WTC11 (cell line): ENCODE measurements at regions of chr19 and their contacts with region 1.

Region 1: DNA sequence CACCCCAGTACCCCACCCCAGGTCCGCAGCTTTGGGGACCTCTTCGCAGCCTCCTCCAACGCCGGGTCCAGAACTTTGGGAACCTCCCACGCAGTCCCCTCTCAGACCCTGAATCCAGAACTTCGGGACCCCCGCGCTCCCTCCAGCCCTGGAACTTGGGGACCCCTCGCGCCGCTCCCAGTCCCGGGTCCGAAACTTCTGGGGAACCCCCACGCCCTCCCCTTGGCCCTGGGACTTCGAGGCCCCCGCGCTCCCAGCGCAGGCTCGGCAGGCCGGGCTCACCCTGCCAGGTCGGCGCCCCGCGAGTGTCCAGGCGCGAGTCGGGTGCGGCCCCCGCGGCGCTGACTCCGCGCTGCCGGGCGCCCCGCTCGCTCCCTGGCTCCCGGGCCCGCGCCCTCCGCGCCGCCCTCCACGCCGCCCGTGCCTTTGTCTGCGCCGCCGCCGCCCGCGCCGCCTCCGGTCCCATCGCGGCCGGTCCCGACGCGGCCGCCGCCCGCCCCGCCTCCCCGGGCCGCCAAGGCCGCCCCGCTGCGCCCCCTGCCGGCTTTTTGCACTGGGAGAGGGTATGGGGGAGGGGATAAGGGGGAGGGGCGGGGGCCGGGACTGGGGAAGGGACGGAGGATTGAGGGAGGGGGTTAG is at the start of gene HOMER3:
- DNase-seq: peak; percentile 71
- ATAC-seq: peak; percentile 29
- H3K4me3 Mint-ChIP-seq: peak within 1 kb of the TSS; percentile 82
- H3K27ac Mint-ChIP-seq: no peak within 1 kb of the TSS; the same call in 1 of the 2 replicates
- H3K4me1 Mint-ChIP-seq: peaks cover 24% of the 10 kb centered on the region
- H3K27me3 Mint-ChIP-seq: peaks cover 34% of the 10 kb centered on the region
- CTCF ChIP-seq: no peak
- total RNA-seq, gene HOMER3: 28.2 to 32.4 TPM (median 32.2 TPM) in 3 replicates

Region 2: DNA sequence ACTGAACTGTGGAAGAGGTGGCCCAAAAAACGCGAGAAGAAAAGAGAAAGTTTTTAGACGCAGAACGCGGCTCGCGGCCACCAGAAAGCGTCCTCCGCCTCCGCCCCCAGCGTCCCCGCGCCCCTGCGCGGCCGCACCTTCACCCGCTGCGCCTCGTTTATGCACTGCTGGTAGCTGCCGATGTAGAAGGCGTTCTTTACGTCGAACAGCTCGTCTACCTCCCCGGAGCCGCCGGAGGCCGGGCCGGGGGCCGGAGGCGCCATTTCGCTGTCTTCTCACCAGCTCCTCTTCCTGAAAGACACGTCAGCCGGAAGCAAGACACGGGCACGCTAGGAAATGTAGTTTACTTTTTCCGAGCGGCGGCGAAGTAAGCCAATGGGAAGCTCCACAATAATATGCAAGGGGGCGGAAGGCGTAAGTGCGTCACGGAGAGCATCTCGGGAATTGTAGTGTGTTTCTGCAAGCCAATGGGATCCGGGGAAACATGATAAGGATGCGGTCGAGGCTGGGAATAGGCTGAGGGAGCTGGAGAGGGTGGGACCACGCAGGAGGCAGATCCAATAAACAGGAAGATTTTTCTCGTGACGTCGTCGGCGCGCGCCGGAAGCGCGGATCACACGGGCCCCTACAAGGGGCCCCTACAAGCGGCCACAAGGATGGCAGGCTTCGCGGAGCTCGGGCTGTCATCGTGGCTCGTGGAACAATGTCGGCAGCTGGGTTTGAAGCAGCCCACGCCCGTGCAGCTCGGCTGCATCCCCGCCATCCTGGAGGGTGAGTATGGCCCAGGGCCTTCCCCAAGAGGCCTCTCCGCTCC is 21.6 kb before region 1 on chr19 and contains the starts of genes COPE and DDX49:
- CTCF ChIA-PET with region 1: interaction called, 11 read pairs
- POLR2A ChIA-PET with region 1: interaction called, 7 read pairs
- DNase-seq: peak; percentile 97
- ATAC-seq: peak; percentile 99
- H3K4me3 Mint-ChIP-seq: peak within 1 kb of the TSS; percentile 99
- H3K27ac Mint-ChIP-seq: peak within 1 kb of the TSS; percentile 93
- H3K4me1 Mint-ChIP-seq: peaks cover 10% of the 10 kb centered on the region
- H3K27me3 Mint-ChIP-seq: no peaks in the 10 kb centered on the region; the same call in 1 of the 2 replicates
- CTCF ChIP-seq: no peak
- total RNA-seq, gene COPE: 224 to 240 TPM (median 228 TPM) in 3 replicates
- total RNA-seq, gene DDX49: 30.1 to 47.9 TPM (median 36.4 TPM) in 3 replicates